Kidney (tissue), 22 donors: ENCODE measurements at regions of chr2 and their contacts with region 1.

Region 1: DNA sequence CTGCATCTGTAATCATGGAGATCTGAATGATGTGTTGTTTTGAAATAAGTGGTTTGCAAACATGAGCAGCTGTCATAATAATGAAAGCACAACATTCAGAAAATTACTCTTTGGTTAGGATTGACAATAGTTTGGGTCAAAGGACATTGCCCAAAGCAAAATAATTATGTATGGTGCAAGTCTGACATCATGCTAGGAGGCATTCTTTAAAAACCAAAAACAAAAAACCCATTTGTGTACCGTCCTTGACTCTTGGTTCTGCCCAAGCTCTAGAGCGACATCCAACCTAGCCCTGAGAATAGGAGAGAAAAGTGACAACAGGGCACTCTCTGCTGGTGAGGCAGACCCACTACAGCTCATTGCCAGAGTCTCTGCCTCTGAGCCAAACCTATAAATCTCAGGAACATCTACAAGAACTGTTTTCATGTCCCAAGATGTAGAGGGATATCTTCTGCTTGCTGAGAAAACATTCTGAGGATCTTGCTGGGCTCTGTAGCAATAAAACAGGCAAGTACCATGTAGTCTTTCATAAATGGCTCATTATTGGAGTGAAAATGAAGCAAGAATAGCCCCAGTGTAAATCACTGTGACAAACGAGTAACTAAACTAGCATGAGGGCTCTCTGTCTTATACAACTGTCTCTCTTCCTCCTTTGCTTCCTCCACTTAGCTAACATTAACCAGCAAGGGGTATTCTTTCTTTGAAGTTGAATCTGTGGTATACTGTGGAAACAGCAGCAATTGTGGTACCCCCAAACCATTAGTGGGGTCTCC is 266.8 kb upstream of the CXCR4 start:
- DNase-seq: peak in 4 of 5 donors; percentile 41 to 68 (median 58)
- H3K4me3 ChIP-seq: no peak overlapping the region
- H3K27ac ChIP-seq: no peak overlapping the region
- H3K4me1 ChIP-seq: no peaks in the 10 kb centered on the region
- H3K27me3 ChIP-seq: no peaks in the 10 kb centered on the region
- CTCF ChIP-seq: peak; percentile 70

Region 2: GRCh38 chr2:135820003-135820618 is 564.6 kb before region 1 on chr2:
- intact Hi-C with region 1: no loop called
- DNase-seq: no peak
- H3K4me3 ChIP-seq: no peak overlapping the region
- H3K27ac ChIP-seq: no peak overlapping the region
- H3K4me1 ChIP-seq: no peaks in the 10 kb centered on the region
- H3K27me3 ChIP-seq: no peaks in the 10 kb centered on the region
- CTCF ChIP-seq: no peak

Region 3: DNA sequence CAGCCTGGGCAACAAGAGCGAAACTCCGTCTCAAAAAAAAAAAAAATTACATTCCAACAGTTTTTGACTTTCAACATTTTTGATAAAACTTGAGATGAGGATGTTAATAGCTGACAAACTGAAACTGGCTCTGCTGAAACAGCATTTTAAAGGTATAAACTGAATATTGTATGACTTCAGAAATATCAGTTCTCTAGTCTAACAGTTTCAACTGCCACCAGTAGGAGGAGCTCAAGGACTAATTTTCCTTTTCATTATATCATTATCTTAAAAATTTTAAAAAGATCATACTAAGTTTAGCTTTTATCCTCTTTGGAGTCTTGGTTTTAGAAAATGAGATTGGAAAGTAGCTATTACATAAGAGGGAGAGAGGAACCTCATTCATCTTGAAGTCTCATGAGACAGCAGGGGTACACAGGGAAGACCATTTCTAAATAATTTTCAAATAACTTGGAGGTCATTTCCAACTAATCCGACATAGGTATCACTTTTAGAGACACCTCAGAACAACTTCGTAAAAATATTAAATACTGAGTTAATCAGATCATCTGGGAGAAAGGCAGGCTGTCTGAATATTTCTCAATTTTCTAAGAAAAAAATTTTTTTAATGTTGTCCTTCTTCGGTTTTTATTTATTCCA is 470.9 kb before region 1 on chr2:
- intact Hi-C with region 1: loop called (anchors 10 kb)
- DNase-seq: peak in 2 of 5 donors; percentile 55 to 69
- H3K4me3 ChIP-seq: no peak overlapping the region
- H3K27ac ChIP-seq: no peak overlapping the region
- H3K4me1 ChIP-seq: no peaks in the 10 kb centered on the region
- H3K27me3 ChIP-seq: no peaks in the 10 kb centered on the region
- CTCF ChIP-seq: peak; percentile 61

Region 4: DNA sequence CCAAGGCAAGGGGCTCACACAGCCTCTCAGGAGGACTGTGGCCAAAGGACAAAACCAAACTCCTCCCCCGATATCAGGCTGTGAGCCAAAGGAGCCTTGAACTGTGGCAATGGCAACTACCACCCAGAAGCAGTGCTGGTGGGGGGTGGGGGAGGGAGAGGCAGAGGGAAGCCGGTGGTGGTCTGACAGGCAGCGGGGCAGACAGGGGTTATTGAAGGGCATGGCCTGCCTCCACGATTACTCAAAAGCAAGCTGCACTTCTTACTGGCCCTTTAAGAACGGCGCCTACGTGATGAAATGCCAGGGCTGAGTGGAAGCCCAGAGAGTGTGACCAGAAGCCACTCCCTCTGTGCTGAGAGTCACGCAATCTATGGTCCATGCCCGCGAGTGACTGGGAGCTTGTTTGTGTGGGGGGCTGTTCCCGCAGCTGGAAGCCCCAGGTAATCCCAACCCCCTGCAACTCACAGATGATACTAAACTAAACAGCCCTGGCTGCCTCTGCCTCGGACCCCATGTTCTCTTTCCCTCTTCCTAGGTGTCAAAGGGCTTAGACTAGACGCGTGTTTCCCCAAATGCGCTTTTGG is 138.5 kb before region 1 on chr2:
- intact Hi-C with region 1: no loop called
- DNase-seq: peak; percentile 78 to 89 (median 85)
- H3K4me3 ChIP-seq: peak overlapping the region in 2 of 3 donors; percentile 43 to 61
- H3K27ac ChIP-seq: no peak overlapping the region
- H3K4me1 ChIP-seq: peaks cover 0 to 3% (median 0%) of the 10 kb centered on the region in 3 donors
- H3K27me3 ChIP-seq: no peaks in the 10 kb centered on the region
- CTCF ChIP-seq: no peak